CD14-positive monocyte (primary cell): ENCODE measurements at regions of chr5 and their contacts with region 1.

Region 1: DNA sequence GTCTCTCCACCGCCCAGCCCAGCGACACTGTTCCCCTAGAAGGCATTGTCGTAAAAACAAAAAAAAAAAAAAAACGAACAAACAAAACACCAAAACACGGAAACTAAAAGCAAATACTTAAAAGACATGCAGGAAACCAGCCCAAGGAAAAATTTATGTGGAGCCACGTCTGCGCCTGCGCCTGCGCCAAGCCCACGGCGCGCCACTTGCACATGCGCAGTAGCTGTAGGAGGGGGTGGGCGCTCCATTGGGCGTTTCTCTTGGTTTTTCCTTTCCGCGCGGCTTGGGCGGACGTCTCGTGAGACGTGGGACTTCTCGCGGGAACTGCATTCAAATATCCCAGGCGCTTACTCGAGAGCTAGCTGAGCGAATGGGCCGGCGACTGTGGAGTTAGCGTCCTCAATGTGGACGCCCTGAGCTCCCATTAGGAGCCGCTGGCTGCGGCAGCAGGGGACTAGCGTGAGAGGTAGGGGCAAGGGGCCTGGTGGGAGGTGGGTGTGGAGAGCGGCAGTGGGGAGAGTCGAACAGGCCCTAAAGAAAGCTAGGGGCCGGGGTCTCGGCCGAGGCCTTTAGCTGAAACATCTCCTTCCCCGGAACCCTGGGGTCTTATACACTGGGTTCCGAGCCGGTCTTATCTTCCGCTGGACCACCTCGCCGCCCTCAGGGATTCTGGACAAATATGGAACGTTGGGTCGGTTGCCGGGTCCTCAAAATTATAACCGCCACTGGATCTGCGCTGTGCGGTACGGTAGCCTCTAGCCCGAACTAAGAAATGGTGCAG is at the start of gene SPDL1:
- DNase-seq: peak; percentile 91 to 94 (median 92)
- H3K4me3 ChIP-seq: peak within 1 kb of the TSS; percentile 61 to 87 (median 84)
- H3K4me3 Mint-ChIP-seq: peak within 1 kb of the TSS; percentile 94 to 98
- H3K27ac ChIP-seq: peak within 1 kb of the TSS; percentile 34 to 73
- H3K27ac Mint-ChIP-seq: peak within 1 kb of the TSS; percentile 85 to 95 (median 90)
- H3K4me1 ChIP-seq: peaks cover 11 to 15% of the 10 kb centered on the region in 2 donors
- H3K4me1 Mint-ChIP-seq: peaks cover 21% of the 10 kb centered on the region
- H3K27me3 ChIP-seq: peaks cover 5 to 7% of the 10 kb centered on the region in 2 donors
- H3K27me3 Mint-ChIP-seq: peaks cover 0 to 12% (median 2%) of the 10 kb centered on the region in 3 donors
- CTCF ChIP-seq: no peak
- polyA plus RNA-seq, gene SPDL1: 1.4 to 1.6 (median 1.6) TPM

Region 2: DNA sequence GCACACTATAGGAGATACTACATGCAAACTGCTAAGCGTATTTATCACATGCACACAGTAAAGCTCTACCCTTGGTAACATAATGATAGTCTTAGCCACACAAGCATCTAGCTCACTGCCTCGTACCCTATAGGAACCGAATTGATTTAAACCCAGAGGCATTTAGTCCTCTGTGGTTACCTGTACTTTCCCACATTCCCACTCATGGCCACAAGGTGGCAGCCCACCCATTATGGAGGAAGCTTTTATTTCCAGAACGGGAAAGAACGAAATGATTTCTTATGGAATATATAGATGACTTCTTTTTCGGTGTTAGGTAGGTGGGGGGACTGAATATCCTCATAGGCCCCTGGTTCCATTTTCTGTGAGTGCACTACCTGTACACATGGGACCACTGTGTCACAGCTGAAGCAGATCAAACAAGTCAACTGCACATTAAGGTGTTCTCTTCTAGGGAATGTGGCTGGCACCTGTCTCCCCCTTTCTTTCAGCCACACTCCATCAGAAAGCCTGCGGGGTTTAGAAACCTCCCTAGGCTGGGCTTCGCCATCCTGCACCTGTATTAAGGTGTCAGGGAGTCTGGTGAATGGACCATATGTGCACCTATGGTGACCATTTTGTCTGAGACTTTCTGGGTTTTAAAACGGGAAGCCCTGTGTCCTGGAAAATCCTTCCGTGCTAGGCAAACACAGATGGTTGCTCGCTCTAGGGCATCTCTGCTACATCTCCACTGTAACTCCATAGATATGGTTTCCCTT is 595.9 kb before region 1 on chr5:
- intact Hi-C with region 1: loop called in 1 of 2 experiments (anchors 5 kb)
- DNase-seq: peak; percentile 9 to 30 (median 10)
- H3K4me3 ChIP-seq: no peak overlapping the region
- H3K4me3 Mint-ChIP-seq: no peak overlapping the region
- H3K27ac ChIP-seq: no peak overlapping the region
- H3K27ac Mint-ChIP-seq: no peak overlapping the region
- H3K4me1 ChIP-seq: no peaks in the 10 kb centered on the region
- H3K4me1 Mint-ChIP-seq: no peaks in the 10 kb centered on the region
- H3K27me3 ChIP-seq: no peaks in the 10 kb centered on the region
- H3K27me3 Mint-ChIP-seq: peaks cover 2 to 5% (median 2%) of the 10 kb centered on the region in 3 donors
- CTCF ChIP-seq: peak; percentile 83

Region 3: DNA sequence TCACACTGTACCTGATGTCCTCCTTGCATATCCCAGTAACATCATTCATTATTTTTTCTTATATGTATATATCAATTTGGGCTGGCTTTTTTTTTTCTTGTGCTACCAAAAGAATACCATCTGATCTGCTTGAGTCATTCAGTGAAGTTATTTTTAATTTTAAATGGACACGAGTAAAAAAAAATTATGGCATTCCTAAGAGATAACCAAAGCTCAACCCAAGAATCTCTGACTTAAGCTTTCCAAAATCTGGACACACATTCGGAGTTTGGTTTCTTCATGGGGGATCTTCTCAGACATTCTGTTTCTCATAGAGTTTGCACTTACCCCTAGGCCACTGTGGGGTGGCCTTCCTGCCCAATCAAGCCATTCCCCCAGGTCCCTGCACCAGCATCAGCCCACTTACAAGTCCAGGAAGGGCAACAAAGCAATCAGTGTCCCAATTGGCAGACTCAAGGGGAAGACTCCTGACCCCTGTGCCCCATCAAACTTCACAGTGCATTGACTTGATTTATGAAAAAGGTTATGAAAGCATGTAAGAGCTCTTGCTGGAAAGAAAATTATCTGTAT is 49.2 kb before region 1 on chr5:
- intact Hi-C with region 1: no loop called
- DNase-seq: no peak
- H3K4me3 ChIP-seq: no peak overlapping the region
- H3K4me3 Mint-ChIP-seq: no peak overlapping the region
- H3K27ac ChIP-seq: no peak overlapping the region
- H3K27ac Mint-ChIP-seq: no peak overlapping the region
- H3K4me1 ChIP-seq: no peaks in the 10 kb centered on the region
- H3K4me1 Mint-ChIP-seq: no peaks in the 10 kb centered on the region
- H3K27me3 ChIP-seq: no peaks in the 10 kb centered on the region
- H3K27me3 Mint-ChIP-seq: peaks cover 0 to 4% (median 4%) of the 10 kb centered on the region in 3 donors
- CTCF ChIP-seq: no peak

Region 4: DNA sequence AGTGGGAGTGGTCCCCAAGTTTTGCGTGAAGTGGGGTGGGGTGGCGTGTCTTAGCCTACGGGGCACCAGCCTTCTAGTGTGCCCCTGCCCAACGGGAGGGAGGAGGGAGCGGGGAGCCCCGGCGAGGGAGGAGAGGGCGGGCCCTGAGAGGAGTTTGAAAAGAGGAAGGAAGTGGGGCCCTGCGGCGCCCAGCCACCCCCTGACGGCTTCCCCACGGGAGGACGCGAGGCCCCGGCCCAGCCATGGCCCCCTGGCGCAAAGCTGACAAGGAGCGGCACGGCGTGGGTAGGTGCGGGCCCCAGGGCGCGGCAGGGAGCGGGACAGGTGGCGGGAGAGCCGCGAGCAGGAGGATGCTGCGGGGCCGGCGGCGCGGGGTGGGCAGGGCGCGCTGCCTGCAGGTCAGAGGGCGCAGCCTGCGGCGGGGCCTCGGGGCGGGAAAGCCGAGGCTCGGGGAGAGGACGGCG is 53.5 kb after region 1 on chr5 and contains the start of gene DOCK2:
- intact Hi-C with region 1: loop called (anchors 2 to 5 kb)
- DNase-seq: peak; percentile 81 to 82 (median 82)
- H3K4me3 ChIP-seq: peak within 1 kb of the TSS; percentile 48 to 97 (median 89)
- H3K4me3 Mint-ChIP-seq: peak within 1 kb of the TSS; percentile 88 to 94
- H3K27ac ChIP-seq: peak within 1 kb of the TSS; percentile 97
- H3K27ac Mint-ChIP-seq: peak within 1 kb of the TSS; percentile 94 to 99 (median 96)
- H3K4me1 ChIP-seq: peaks cover 55 to 59% of the 10 kb centered on the region in 2 donors
- H3K4me1 Mint-ChIP-seq: peaks cover 55% of the 10 kb centered on the region
- H3K27me3 ChIP-seq: no peaks in the 10 kb centered on the region
- H3K27me3 Mint-ChIP-seq: peaks cover 0 to 2% (median 0%) of the 10 kb centered on the region in 3 donors
- CTCF ChIP-seq: no peak
- polyA plus RNA-seq, gene DOCK2: 57.5 to 178 (median 115) TPM

Region 5: DNA sequence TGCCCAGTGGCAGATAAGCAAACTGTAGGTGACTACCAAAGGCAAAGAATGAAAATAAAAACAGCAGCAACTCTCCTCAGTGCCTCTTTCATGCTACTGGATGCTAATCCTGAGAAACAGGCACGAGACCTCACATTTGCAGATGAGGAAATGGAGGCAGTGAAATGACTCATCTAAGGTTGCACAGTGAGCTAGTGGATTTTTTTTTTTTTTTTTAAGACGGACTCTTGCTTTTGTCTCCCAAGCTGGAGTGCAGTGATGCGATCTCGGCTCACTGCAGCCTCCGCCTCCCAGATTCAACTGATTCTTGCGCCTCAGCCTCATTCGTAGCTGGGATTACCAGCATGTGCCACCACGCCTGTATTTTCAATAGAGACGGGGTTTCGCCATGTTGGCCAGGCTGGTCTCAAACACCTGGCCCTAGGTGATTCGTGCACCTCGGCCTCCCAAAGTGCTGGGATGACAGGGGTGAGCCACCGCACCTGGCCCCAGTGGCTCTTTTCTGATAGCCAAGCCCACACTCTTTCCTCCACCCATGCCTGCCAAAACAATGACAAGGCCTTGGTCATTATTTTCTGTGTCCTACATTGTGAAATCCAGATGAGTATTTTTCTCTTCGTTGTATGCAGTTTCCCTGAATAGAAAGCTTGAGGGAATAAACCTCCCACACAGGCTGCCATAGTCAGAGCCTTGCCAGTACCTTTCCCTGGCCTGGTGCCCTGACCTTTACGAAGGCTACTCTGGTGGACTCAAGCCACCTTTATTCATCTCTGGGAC is 72.7 kb after region 1 on chr5:
- intact Hi-C with region 1: loop called in 1 of 2 experiments (anchors 5 kb)
- DNase-seq: peak; percentile 80 to 89 (median 80)
- H3K4me3 ChIP-seq: no peak overlapping the region
- H3K4me3 Mint-ChIP-seq: no peak overlapping the region
- H3K27ac ChIP-seq: peak overlapping the region; percentile 82 to 93
- H3K27ac Mint-ChIP-seq: peak overlapping the region; percentile 86 to 97 (median 93)
- H3K4me1 ChIP-seq: peaks cover 50 to 55% of the 10 kb centered on the region in 2 donors
- H3K4me1 Mint-ChIP-seq: peaks cover 54% of the 10 kb centered on the region
- H3K27me3 ChIP-seq: no peaks in the 10 kb centered on the region
- H3K27me3 Mint-ChIP-seq: no peaks in the 10 kb centered on the region
- CTCF ChIP-seq: no peak

Region 6: DNA sequence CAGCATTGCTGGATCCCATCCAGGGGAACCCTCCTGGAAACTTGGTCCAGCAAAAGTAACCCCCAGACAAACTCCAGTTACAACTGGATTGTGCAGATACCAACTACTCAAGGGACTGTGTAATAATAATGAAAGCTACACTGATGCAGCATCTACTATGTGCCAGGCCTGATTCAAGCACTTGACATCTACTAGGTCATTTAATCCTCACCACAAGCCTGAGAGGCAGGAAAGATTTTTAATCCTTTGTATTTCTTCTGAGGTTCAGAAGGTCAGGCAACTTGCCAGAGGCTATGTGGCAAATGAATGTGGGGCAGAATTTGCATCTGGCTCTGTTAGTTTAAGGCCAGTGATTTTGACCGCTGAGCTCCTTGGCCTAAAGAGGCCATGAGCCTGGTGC is 492.6 kb after region 1 on chr5:
- intact Hi-C with region 1: no loop called
- DNase-seq: no peak
- H3K4me3 ChIP-seq: no peak overlapping the region
- H3K4me3 Mint-ChIP-seq: no peak overlapping the region
- H3K27ac ChIP-seq: no peak overlapping the region
- H3K27ac Mint-ChIP-seq: no peak overlapping the region
- H3K4me1 ChIP-seq: no peaks in the 10 kb centered on the region
- H3K4me1 Mint-ChIP-seq: no peaks in the 10 kb centered on the region
- H3K27me3 ChIP-seq: no peaks in the 10 kb centered on the region
- H3K27me3 Mint-ChIP-seq: no peaks in the 10 kb centered on the region
- CTCF ChIP-seq: no peak